ENCODE measurements at regions of chr18 and their contacts with region 1.

Region 1: DNA sequence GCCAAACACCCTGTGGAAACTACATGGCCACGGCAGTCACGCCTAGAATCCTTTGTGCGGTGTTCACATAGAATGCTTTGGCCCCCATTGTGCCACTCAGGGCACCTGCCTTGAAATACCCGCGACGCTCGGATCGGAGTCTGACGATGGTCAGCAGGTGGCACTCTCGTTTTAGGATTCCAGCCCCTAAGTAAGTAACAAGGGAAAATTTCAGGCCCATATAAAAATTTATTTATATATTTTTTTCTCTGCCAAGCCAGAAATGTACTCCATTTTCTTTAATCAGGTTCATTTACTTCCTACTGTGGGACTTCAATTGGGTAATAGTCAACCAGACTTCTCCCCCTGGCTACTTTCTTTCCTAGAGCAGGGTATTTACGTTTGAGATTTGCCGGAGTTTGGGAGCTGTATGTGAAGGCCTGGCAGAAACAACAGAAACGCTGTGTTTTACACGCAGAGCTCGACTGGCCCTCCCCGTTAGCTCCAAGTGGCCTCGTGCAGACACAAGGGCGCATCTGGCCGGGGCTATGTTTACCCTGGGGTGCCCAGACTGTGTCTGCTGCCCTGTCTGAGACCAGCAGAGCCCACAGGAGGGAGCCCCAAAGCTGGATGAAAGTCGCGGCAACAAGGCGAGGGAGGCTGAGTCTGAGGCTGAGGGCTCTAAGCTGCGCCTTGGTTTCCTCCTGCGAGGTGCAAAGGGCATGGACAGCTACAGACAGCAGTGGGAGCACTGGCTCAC is 41.6 kb downstream of the LRRC30 start:
- DNase-seq: peak; percentile 79
- H3K4me3 ChIP-seq: no peak overlapping the region
- H3K27ac ChIP-seq: peak overlapping the region; percentile 72
- H3K4me1 ChIP-seq: peaks cover 18% of the 10 kb centered on the region
- H3K27me3 ChIP-seq: peaks cover 1 to 3% of the 10 kb centered on the region in 2 experiments
- CTCF ChIP-seq: peak; percentile 50 to 62
- POLR2A ChIP-seq: no peak

Region 2: DNA sequence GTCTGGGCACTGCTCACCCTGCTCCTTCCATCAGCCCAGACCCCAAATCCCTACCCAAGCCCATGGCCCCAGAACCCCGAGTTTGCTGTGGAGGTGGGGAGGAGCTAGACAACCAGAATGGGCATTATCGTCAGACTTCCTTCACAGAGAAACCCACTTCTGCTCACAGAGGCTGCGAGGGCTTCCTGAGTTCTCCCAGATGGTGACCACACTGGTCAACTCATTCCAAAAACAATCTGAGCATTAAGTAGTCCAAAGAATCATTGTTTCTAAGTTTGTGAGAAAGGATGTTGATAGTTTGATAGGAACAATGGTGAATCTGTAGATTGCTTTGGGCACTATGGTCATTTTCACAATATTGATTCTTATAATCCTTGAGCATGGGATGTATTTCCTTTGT is 18.6 kb after region 1 on chr18:
- CTCF ChIA-PET with region 1: interaction called, 7 read pairs
- POLR2A ChIA-PET with region 1: no interaction called
- dilution Hi-C with region 1: no loop called
- intact Hi-C with region 1: loop called (anchors 1 kb)
- DNase-seq: peak; percentile 45
- H3K4me3 ChIP-seq: no peak overlapping the region
- H3K27ac ChIP-seq: no peak overlapping the region
- H3K4me1 ChIP-seq: peaks cover 4% of the 10 kb centered on the region
- H3K27me3 ChIP-seq: no peaks in the 10 kb centered on the region
- CTCF ChIP-seq: no peak
- POLR2A ChIP-seq: no peak

Region 3: DNA sequence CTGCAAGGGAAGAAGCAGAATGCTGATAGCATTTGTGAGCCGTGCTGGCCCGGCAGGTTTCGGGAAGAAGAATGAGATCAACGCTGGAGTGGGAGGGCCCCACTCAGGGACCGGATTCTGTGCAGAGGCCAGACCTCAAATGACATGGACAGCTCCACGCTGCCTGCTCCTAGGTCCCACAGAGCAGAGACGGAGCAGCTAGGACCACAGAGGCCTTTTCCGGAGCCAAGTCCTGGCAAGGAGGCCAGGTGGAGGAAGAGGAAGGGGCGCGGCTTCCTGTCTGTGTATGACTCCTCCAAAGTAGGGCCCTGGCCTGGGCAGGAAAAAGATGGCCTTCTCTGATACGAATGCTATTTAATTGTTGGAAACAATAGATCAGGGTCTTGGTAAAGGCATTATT is 98.3 kb after region 1 on chr18:
- CTCF ChIA-PET with region 1: interaction called, 68 read pairs
- POLR2A ChIA-PET with region 1: interaction called, 4 read pairs
- dilution Hi-C with region 1: no loop called
- intact Hi-C with region 1: loop called (anchors 1 kb)
- DNase-seq: peak; percentile 88
- H3K4me3 ChIP-seq: peak overlapping the region in 1 of 3 experiments; percentile 29
- H3K27ac ChIP-seq: peak overlapping the region; percentile 98
- H3K4me1 ChIP-seq: peaks cover 35% of the 10 kb centered on the region
- H3K27me3 ChIP-seq: peaks cover 0 to 2% of the 10 kb centered on the region in 2 experiments
- CTCF ChIP-seq: no peak
- POLR2A ChIP-seq: no peak

Region 4: DNA sequence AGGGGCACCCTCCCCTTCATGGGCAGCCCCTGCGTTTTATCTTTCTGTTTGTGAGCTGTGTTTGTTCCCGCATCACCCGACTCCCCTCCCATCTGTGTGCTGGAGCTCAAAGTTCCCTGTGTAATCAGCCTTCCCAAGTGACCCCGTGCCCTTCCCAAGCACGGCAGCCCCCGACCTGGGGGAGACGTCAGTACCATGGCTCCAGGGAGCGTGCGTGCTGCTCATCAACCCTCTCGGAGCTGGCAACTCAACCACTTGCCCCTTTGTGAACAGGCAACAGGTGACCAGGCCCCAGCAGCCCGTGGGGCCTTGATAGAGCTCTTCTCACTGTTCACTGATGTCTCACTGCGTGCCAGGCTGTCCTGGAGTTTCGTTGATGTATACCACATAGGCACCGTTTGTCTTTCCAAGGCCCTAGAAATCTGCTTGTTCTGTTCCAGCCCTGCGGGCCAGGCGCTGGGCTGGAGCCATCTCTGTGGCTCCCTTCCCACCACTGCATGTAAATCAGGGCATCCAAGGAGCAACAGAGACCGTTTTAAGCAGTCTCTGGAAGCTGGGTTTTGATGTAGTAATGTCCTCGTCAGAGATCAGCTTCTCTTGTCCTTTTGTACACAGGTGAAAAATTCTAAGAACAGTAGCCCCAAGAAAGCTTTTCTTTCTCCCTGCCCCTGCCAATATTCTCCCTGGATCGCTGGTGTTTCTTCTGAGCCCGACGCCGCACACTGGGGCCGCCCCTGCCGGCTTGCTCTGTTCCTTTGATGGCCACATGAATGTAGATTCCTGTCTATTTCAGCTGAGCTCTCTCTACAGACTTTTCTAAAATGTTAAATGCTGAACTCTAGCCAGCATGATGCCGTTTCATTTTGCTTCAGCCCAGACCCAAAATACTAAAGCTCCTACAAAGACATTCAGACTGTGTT is 187.6 kb after region 1 on chr18:
- CTCF ChIA-PET with region 1: interaction called, 13 read pairs
- POLR2A ChIA-PET with region 1: no interaction called
- dilution Hi-C with region 1: no loop called
- intact Hi-C with region 1: no loop called
- DNase-seq: no peak
- H3K4me3 ChIP-seq: no peak overlapping the region
- H3K27ac ChIP-seq: no peak overlapping the region
- H3K4me1 ChIP-seq: no peaks in the 10 kb centered on the region
- H3K27me3 ChIP-seq: peaks cover 0 to 6% of the 10 kb centered on the region in 2 experiments
- CTCF ChIP-seq: no peak
- POLR2A ChIP-seq: no peak

Region 5: DNA sequence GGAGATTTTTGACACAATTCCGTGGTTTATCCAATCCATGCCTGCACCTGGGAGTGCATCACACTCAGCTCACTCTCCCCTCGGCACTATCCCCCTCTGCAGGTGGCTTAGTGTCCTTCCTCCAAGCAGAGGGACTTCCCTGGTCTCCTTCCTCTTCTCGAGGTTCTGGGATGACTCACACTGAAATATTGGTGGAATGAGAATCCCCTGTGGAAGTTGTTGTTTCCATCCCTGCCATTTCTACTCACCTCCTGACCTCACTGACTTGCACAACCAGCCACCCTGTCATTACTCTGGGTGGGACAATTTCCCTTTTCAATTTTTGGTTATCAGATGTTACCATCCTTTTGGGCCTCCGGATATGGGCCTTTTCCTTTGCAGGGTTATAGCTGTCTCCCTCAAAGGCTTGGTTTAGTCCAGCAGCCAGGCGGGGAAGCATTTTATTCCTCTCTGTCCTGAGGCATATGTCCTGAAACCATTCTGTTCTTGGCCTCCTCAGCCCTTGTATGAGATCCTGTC is 354.5 kb after region 1 on chr18:
- CTCF ChIA-PET with region 1: interaction called, 9 read pairs
- POLR2A ChIA-PET with region 1: no interaction called
- dilution Hi-C with region 1: no loop called
- intact Hi-C with region 1: loop called (anchors 1 kb)
- DNase-seq: peak; percentile 46
- H3K4me3 ChIP-seq: no peak overlapping the region
- H3K27ac ChIP-seq: no peak overlapping the region
- H3K4me1 ChIP-seq: peaks cover 13% of the 10 kb centered on the region
- H3K27me3 ChIP-seq: no peaks in the 10 kb centered on the region
- CTCF ChIP-seq: peak in 1 of 2 donors; percentile 4
- POLR2A ChIP-seq: no peak

Region 6: GRCh38 chr18:8084160-8084559 is 811.7 kb after region 1 on chr18:
- CTCF ChIA-PET with region 1: interaction called, 4 read pairs
- POLR2A ChIA-PET with region 1: no interaction called
- dilution Hi-C with region 1: no loop called
- intact Hi-C with region 1: loop called (anchors 2 kb)
- DNase-seq: peak; percentile 43
- H3K4me3 ChIP-seq: no peak overlapping the region
- H3K27ac ChIP-seq: no peak overlapping the region
- H3K4me1 ChIP-seq: no peaks in the 10 kb centered on the region
- H3K27me3 ChIP-seq: no peaks in the 10 kb centered on the region
- CTCF ChIP-seq: peak; percentile 55 to 64
- POLR2A ChIP-seq: no peak